ENCODE measurements at regions of chr12 and their contacts with region 1.

Region 1: GRCh38 chr12:126874427-126875026 is 1392.4 kb upstream of the TMEM132C start:
- DNase-seq: peak; percentile 85
- H3K4me3 Mint-ChIP-seq: no peak overlapping the region
- H3K27ac Mint-ChIP-seq: no peak overlapping the region
- H3K4me1 Mint-ChIP-seq: no peaks in the 10 kb centered on the region
- H3K27me3 Mint-ChIP-seq: no peaks in the 10 kb centered on the region

Region 2: GRCh38 chr12:125183187-125184067 is 1691.1 kb before region 1 on chr12:
- intact Hi-C with region 1: loop called (anchors 5 kb)
- DNase-seq: peak; percentile 95
- H3K4me3 Mint-ChIP-seq: no peak overlapping the region
- H3K27ac Mint-ChIP-seq: no peak overlapping the region
- H3K4me1 Mint-ChIP-seq: peaks cover 11% of the 10 kb centered on the region
- H3K27me3 Mint-ChIP-seq: peaks cover 45% of the 10 kb centered on the region

Region 3: GRCh38 chr12:125533434-125534029 is 1341.0 kb before region 1 on chr12:
- intact Hi-C with region 1: loop called (anchors 5 kb)
- DNase-seq: peak; percentile 73
- H3K4me3 Mint-ChIP-seq: no peak overlapping the region
- H3K27ac Mint-ChIP-seq: no peak overlapping the region
- H3K4me1 Mint-ChIP-seq: no peaks in the 10 kb centered on the region
- H3K27me3 Mint-ChIP-seq: no peaks in the 10 kb centered on the region

Region 4: DNA sequence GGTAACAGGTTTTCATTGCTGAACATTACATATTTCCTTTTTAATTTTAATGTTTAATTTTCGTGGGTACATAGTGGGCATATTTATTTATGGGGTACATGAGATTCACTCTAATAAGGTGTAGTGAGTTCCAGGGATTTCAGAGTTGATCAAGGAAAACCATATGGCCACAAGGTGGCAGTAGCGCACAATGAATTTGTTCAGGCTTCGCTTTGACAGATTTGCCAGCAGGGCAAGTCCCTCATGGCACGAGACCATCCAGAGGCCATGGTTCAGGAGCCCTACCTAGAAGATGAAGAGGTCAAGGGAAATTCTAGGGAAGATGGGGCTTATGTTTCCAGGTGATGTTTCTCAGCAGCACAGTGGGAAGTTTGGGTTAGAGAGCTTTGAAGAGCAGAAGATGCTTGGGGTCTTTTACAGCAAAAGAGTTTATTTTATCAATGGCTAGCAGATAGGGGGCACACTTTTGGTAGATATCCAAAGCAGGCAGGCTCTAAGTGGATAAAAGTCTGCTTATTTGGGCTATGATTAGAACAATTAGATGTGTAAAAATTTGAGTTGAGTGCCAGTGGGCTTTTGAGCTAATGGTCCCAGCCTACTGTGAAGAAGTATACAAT is 804.9 kb before region 1 on chr12:
- intact Hi-C with region 1: loop called (anchors 2 kb)
- DNase-seq: peak; percentile 84
- H3K4me3 Mint-ChIP-seq: no peak overlapping the region
- H3K27ac Mint-ChIP-seq: no peak overlapping the region
- H3K4me1 Mint-ChIP-seq: no peaks in the 10 kb centered on the region
- H3K27me3 Mint-ChIP-seq: no peaks in the 10 kb centered on the region

Region 5: GRCh38 chr12:126464153-126464552 is 410.4 kb before region 1 on chr12:
- intact Hi-C with region 1: no loop called
- DNase-seq: no peak
- H3K4me3 Mint-ChIP-seq: no peak overlapping the region
- H3K27ac Mint-ChIP-seq: no peak overlapping the region
- H3K4me1 Mint-ChIP-seq: no peaks in the 10 kb centered on the region
- H3K27me3 Mint-ChIP-seq: no peaks in the 10 kb centered on the region

Region 6: GRCh38 chr12:126989532-126989931 is 115.0 kb after region 1 on chr12:
- intact Hi-C with region 1: no loop called
- DNase-seq: no peak
- H3K4me3 Mint-ChIP-seq: no peak overlapping the region
- H3K27ac Mint-ChIP-seq: no peak overlapping the region
- H3K4me1 Mint-ChIP-seq: no peaks in the 10 kb centered on the region
- H3K27me3 Mint-ChIP-seq: no peaks in the 10 kb centered on the region

Measured in activated CD4-positive, alpha-beta T cell treated with anti-CD3 and anti-CD28 coated beads, Interleukin-2, amount 10 ng/mL, durations not matched to agents 24 days and 14 days (primary cell).